ENCODE measurements at regions of chr9 and their contacts with region 1.

Region 1: DNA sequence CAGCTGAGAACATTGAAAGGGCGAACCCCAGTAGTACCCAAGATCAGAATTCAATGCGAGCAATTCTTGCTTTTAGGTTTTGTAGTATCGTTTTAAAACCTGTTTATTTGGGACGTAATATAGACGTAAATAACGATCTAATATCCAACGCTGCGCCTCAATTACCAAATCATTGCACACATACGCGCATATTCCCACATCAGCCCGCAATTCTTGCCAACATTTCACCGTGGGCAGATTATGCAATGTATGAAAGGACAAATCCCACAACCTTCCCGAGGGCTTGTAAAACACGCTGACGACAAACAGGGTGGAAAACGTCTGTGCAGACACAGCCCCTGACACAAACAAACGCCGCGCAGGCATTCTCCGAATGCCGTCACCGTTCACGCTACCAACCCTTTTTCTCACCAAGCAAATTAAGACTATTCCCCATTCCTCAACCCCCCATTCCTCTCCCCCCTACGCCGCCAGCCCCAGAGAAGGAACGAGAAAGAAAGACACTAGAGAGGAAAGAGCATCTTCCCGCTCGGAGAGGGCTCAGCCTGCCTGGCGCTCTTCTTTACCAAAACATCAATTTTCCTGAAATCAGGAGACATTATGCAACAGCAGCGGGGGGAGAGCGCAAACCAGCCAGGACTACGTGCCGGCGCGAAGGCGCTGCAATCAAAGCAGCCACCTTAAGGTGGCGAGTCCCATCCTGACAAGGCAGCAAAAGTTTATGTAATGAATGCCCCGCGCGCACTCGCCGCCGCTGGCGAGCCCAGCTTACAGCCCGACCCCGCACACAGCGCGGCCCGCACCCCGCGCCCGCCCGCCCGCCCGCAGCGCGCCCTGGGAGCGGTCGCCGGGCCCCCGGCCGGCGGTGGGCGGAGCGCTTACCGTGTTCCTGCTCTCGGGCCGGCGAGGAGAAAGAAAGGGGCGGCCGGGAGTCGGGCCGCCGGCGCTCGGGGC is 597 bp downstream of the NFIL3 start:
- DNase-seq: peak; percentile 79
- H3K4me3 ChIP-seq: peak overlapping the region; percentile 76 to 79
- H3K27ac ChIP-seq: peak overlapping the region; percentile 92
- H3K4me1 ChIP-seq: no peaks in the 10 kb centered on the region
- H3K27me3 ChIP-seq: no peaks in the 10 kb centered on the region
- CTCF ChIP-seq: no peak
- POLR2A ChIP-seq: peak; percentile 52

Region 2: DNA sequence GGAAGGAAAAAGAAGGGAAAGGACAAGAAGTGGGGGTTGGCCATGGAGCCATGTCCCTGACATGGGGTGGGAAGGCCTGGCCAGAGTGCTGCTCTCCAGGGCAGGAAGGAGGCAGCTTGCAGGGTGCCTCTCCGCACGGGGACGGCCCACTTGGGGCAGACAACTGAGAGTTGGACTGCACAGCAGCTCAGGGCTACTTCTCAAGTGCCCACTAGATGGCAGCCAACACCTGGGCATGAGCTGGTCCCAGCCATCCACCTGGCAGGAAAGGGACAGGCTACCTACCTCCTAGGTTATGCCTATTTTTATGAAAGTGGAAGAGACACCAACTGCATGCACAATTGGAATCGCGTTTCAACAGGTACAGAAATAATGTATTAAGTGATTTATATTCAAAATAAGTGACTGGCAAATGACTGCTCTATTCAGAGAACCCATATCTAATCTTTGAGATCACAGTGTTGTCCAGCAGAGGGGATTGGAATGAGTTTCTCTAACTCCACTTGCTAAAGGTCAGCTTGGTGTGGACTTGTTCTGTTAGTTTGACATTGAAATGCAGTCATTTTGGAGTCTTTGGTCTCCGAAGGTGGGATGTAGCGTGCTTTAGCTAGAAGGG is 508.1 kb before region 1 on chr9:
- intact Hi-C with region 1: loop called (anchors 2 kb)
- DNase-seq: peak; percentile 76
- H3K4me3 ChIP-seq: no peak overlapping the region
- H3K27ac ChIP-seq: no peak overlapping the region
- H3K4me1 ChIP-seq: peaks cover 3% of the 10 kb centered on the region
- H3K27me3 ChIP-seq: no peaks in the 10 kb centered on the region
- CTCF ChIP-seq: peak; percentile 87 to 97 (median 91)
- POLR2A ChIP-seq: no peak

Region 3: GRCh38 chr9:91036826-91037510 is 386.1 kb before region 1 on chr9:
- intact Hi-C with region 1: loop called (anchors 1 kb)
- DNase-seq: peak; percentile 86
- H3K4me3 ChIP-seq: no peak overlapping the region
- H3K27ac ChIP-seq: peak overlapping the region; percentile 17 to 42
- H3K4me1 ChIP-seq: no peaks in the 10 kb centered on the region
- H3K27me3 ChIP-seq: no peaks in the 10 kb centered on the region
- CTCF ChIP-seq: peak in 3 of 4 experiments; percentile 61 to 81 (median 74)
- POLR2A ChIP-seq: no peak

Region 4: DNA sequence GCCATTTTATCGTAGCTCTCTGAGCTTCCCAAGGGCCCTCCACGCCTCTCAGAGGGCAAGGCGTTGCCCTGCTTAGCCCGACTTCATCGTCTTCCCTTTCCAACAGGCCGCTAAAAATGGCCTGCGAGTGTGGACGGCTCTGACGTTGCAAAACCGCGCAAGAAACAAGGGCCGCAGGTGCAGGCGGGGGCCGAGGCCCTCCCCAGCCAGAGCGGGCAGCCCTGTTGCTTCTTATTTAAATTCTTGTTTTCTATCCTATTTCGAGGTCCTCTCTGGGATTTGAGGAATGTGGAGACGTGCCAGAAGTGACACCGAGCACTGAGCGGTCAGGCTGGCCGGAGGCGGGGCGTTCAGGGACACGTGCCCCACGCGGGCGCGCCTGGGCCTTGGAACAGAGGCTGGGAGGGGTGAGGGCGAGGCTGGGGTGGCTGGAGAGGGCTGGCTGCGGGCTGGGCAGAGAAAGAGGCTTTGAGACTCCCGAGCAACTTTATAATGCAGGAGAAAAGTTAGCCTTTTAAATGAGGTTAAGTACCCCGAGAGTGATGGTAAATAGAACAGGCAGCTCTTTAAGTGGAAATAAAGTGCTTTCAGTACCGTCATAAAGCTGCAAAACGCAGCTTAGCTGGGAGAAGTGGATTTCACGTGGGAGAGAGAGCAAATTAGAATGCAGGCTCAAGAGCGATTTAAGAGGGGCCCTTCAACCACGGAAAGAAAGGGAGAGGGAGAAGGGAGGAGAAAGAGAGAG is 304.9 kb before region 1 on chr9:
- intact Hi-C with region 1: loop called (anchors 5 kb)
- DNase-seq: peak; percentile 15
- H3K4me3 ChIP-seq: no peak overlapping the region
- H3K27ac ChIP-seq: no peak overlapping the region
- H3K4me1 ChIP-seq: no peaks in the 10 kb centered on the region
- H3K27me3 ChIP-seq: no peaks in the 10 kb centered on the region
- CTCF ChIP-seq: no peak
- POLR2A ChIP-seq: no peak

Region 5: GRCh38 chr9:91298311-91298710 is 124.7 kb before region 1 on chr9:
- intact Hi-C with region 1: loop called (anchors 5 kb)
- DNase-seq: no peak
- H3K4me3 ChIP-seq: no peak overlapping the region
- H3K27ac ChIP-seq: no peak overlapping the region
- H3K4me1 ChIP-seq: no peaks in the 10 kb centered on the region
- H3K27me3 ChIP-seq: no peaks in the 10 kb centered on the region
- CTCF ChIP-seq: no peak
- POLR2A ChIP-seq: no peak

Region 6: DNA sequence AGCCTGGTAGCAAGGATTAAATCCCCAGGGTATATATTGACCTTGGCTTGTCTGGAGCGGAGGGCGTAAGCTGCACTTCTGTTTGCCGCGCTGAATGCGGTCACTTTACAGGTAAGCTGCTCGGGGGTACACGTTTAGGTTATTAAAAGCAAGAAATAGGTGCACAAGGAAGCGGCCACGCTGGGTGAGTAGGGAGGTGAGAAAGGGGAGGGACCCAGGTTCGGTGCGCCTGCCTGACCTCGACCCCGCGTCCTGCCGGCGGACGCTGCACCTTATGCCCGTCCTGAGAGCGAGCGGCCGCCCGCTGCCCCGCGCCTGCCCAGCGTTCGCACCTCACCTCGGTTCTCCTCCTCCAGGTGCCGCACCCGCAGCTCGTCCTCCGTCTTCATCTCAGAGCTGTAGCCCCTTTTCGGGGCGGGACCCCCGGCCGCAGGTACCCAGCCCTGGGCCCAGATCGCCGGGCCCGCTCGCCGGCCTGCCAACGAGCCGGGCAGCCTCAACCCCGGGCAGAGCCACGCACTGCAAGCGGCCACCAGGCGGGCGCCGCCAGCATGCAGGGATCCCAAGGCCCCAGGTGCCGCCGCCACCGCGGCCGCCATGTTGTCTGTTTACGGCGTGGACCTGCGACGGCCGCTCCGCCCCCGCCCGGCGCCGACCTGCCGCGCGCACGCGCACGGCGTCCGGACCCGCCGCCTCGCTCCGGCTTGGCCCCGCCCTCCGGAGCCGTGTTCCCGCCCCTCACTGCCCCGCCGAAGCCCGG is 61.6 kb before region 1 on chr9 and contains the start of gene AUH:
- intact Hi-C with region 1: loop called (anchors 2 kb)
- DNase-seq: peak; percentile 81
- H3K4me3 ChIP-seq: peak within 1 kb of the TSS; percentile 97 to 100
- H3K27ac ChIP-seq: peak within 1 kb of the TSS; percentile 93 to 94
- H3K4me1 ChIP-seq: peaks cover under 1% of the 10 kb centered on the region
- H3K27me3 ChIP-seq: no peaks in the 10 kb centered on the region
- CTCF ChIP-seq: peak in 1 of 4 experiments; percentile 25
- POLR2A ChIP-seq: peak; percentile 87
- total RNA-seq, gene AUH: 58.0 to 76.1 TPM

Region 7: GRCh38 chr9:91655215-91655614 is 232.2 kb after region 1 on chr9:
- intact Hi-C with region 1: no loop called
- DNase-seq: no peak
- H3K4me3 ChIP-seq: no peak overlapping the region
- H3K27ac ChIP-seq: no peak overlapping the region
- H3K4me1 ChIP-seq: no peaks in the 10 kb centered on the region
- H3K27me3 ChIP-seq: no peaks in the 10 kb centered on the region
- CTCF ChIP-seq: no peak
- POLR2A ChIP-seq: no peak

Measured in prostate gland (tissue), 2 donors.